K562 (cell line): ENCODE measurements at regions of chr20 and their contacts with region 1.

Region 1: GRCh38 chr20:36861875-36862801 is 13.8 kb upstream of the TLDC2 start:
- DNase-seq: peak; percentile 68 to 87 (median 76)
- ATAC-seq: peak; percentile 59
- H3K4me3 ChIP-seq: peak overlapping the region; percentile 75
- H3K27ac ChIP-seq: peak overlapping the region; percentile 76
- H3K4me1 ChIP-seq: peaks cover 39 to 59% of the 10 kb centered on the region in 2 experiments
- H3K27me3 ChIP-seq: no peaks in the 10 kb centered on the region
- CTCF ChIP-seq: no peak
- EP300 ChIP-seq: peak; percentile 50
- POLR2A ChIP-seq: peak; percentile 78
- RAD21 ChIP-seq: peak in 1 of 2 experiments; percentile 5; a peak in 1 of 4 replicates

Region 2: DNA sequence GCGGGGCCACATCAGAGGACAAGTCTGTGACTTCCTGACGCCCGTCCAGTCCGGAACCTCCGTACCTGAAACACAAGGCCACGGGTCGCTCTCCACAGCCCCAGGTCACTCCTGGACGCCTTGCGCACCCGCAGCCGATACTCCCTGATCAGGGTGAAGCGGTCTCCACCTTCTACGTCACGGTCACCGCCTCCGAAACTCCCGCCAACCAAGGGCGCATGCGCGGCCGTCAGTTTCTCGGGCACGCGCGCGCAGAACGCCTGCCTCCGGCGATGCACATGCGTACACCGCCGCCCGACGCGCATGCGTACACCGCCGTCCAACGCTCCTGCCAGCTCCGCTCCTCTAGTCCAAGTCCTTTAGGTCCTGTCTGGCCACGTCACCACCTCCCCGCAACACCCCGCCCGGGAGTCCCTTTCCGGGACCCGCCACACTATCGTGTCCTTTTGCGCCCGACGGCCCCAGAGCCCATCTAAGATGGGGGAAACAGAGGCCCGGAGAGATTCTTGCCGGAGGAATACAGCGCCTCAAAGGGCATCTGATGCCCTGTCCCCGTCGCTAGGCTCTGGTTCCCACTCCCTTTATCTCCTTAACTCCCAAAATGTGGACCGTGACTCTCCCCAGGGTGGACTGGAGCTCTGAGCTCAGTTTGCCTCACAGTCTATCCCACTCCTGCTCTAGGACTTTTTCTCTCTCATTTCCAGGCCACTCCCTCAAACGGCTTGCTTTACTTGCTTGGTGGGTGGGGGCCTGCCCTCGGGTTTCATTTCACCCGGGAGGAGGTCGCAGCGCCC is 88.3 kb before region 1 on chr20 and contains the start of gene DSN1:
- CTCF ChIA-PET with region 1: no interaction called
- POLR2A ChIA-PET with region 1: interaction called, 3 read pairs
- in situ Hi-C with region 1: no loop called
- intact Hi-C with region 1: loop called (anchors 5 kb)
- DNase-seq: peak; percentile 96 to 99 (median 98)
- ATAC-seq: peak; percentile 92
- H3K4me3 ChIP-seq: peak within 1 kb of the TSS; percentile 79
- H3K27ac ChIP-seq: peak within 1 kb of the TSS; percentile 98
- H3K4me1 ChIP-seq: peaks cover 25 to 32% of the 10 kb centered on the region in 2 experiments; a peak in 4 of 5 replicates
- H3K27me3 ChIP-seq: no peaks in the 10 kb centered on the region
- CTCF ChIP-seq: no peak; a peak in 2 of 6 replicates
- EP300 ChIP-seq: no peak
- POLR2A ChIP-seq: peak; percentile 89
- RAD21 ChIP-seq: peak; percentile 26 to 45; a peak in 2 of 4 replicates
- polyA plus RNA-seq, gene DSN1: 31.1 to 42.4 TPM

Region 3: DNA sequence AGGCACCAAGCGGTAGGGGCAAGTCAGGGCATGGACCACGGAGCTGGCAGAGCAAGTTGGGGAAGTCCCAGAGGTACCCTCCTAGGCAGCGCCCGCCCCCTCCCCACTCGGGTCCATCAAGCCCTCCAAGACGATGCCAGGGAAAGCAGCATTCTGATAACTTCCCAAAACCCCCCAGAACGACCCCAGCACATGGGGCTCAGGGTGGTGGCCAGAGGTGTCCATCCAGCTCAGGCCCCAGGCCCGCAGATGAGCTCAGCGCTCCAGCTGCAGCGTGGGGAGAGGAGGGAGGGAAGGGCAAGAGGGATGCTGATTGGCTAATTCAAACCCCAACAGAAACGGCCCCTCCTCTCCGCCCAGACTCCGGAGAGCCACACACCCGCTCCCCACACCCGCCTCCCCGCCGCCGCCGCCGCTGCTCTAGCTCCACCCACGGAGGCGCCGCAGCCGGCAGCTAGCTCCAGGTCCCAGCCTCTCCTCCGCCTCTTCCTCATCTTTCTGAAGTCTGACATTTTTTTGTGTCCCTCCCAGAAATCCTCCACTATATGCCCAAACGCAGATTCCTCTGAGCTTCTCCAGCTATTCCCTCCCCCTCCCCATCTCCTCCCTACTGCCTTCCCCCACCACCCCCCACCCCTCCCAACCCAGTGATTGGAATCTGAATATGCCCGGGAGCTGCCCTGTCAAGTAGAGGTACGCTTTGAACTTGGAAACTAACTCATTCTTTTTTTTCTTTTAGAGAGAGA is 26.5 kb before region 1 on chr20:
- CTCF ChIA-PET with region 1: no interaction called
- POLR2A ChIA-PET with region 1: interaction called, 7 read pairs
- in situ Hi-C with region 1: no loop called
- intact Hi-C with region 1: loop called (anchors 1 kb)
- DNase-seq: peak; percentile 96 to 100 (median 100)
- ATAC-seq: peak; percentile 98
- H3K4me3 ChIP-seq: no peak overlapping the region; the same call in 1 of the 2 replicates
- H3K27ac ChIP-seq: peak overlapping the region; percentile 91
- H3K4me1 ChIP-seq: peaks cover 17 to 30% of the 10 kb centered on the region in 2 experiments
- H3K27me3 ChIP-seq: no peaks in the 10 kb centered on the region
- CTCF ChIP-seq: no peak
- EP300 ChIP-seq: peak; percentile 11; the same call in 1 of the 2 replicates
- POLR2A ChIP-seq: peak; percentile 80
- RAD21 ChIP-seq: no peak

Region 4: DNA sequence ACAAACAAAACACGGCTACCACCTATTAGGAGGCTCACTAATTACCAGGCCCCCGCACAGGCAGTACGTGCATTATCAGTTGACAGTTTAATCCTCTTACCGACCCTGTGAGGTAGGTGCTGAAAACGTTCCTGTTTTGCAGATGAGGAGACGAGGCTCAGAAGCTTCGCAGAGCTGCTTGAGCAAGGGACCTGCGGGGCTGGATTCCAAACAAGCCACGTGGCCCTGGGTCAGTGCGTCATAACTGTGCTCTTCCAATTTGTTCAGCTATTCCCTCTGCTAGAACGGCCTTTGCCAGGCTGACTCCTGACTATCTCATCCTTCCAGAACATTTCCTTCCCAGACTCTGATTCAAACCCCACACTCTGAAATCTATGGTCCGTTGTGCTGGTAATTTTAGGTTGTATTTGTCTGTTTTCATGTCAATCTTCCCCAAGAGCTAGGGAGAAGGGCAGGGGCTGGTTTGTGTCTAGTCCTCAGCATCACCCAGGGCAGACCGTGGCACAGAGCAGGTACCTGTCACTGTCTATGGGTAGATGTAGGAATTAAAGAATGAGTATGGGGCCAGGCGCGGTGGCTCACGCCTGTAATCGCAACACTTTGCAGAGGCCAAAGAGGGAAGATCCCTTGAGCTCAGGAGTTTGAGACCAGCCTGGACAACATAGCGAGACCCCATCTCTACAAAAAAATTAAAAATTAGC is 15.0 kb before region 1 on chr20:
- CTCF ChIA-PET with region 1: no interaction called
- POLR2A ChIA-PET with region 1: interaction called, 65 read pairs
- in situ Hi-C with region 1: no loop called
- intact Hi-C with region 1: no loop called
- DNase-seq: no peak
- ATAC-seq: no peak
- H3K4me3 ChIP-seq: no peak overlapping the region
- H3K27ac ChIP-seq: peak overlapping the region; percentile 54; the same call in 1 of the 3 replicates
- H3K4me1 ChIP-seq: peaks cover 13 to 27% of the 10 kb centered on the region in 2 experiments; a peak in 4 of 5 replicates
- H3K27me3 ChIP-seq: no peaks in the 10 kb centered on the region
- CTCF ChIP-seq: no peak
- EP300 ChIP-seq: no peak
- POLR2A ChIP-seq: no peak
- RAD21 ChIP-seq: no peak

Region 5: DNA sequence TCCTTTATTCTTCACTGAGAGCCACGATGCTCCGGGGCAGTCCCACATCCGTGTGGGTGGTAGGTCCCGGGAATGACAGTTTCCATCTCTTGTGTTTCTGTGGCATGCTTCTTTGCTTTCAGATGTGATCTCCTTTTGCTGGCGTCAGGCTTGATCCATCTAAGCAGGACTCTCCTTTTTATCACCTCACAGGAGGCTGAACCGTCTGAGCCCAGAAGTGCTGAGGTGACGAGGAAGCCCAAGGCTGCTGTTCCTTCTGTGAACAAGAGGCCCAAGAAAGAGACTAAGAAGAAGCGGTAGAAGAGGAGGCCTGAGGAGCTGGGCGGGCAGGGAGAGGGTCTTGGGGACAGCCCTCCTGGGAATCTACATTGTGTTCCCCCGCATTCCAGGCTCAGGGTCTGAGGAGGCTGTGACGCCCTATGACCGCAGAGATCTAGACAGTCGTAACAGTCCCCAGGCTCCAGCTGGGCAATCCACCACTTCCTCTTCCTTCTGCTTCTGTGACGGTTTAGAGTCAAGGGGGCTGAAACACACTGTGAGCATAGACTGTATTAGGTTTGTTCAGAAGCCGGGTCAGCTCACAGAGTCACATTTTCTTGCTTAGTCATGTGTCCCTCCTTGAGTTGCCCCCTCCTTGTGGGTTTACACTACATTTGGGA is 454.1 kb after region 1 on chr20:
- CTCF ChIA-PET with region 1: no interaction called
- POLR2A ChIA-PET with region 1: no interaction called
- in situ Hi-C with region 1: no loop called
- intact Hi-C with region 1: no loop called
- DNase-seq: peak in 1 of 4 experiments; percentile 51
- ATAC-seq: peak; percentile 71
- H3K4me3 ChIP-seq: no peak overlapping the region
- H3K27ac ChIP-seq: peak overlapping the region; percentile 42; the same call in 2 of the 3 replicates
- H3K4me1 ChIP-seq: peaks cover 30 to 41% of the 10 kb centered on the region in 2 experiments
- H3K27me3 ChIP-seq: no peaks in the 10 kb centered on the region
- CTCF ChIP-seq: no peak
- EP300 ChIP-seq: no peak
- POLR2A ChIP-seq: no peak
- RAD21 ChIP-seq: no peak